ENCODE measurements at regions of chr7 and their contacts with region 1.

Region 1: GRCh38 chr7:23410446-23411183 is 59.7 kb downstream of the IGF2BP3 start:
- DNase-seq: no peak
- ATAC-seq: peak; percentile 93
- H3K4me3 Mint-ChIP-seq: peak overlapping the region; percentile 2
- H3K27ac Mint-ChIP-seq: peak overlapping the region; percentile 79
- H3K4me1 Mint-ChIP-seq: peaks cover 28% of the 10 kb centered on the region
- H3K27me3 Mint-ChIP-seq: no peaks in the 10 kb centered on the region
- CTCF ChIP-seq: no peak

Region 2: GRCh38 chr7:23287612-23288011 is 123.0 kb before region 1 on chr7:
- CTCF ChIA-PET with region 1: no interaction called
- POLR2A ChIA-PET with region 1: interaction called, 10 read pairs
- intact Hi-C with region 1: no loop called
- DNase-seq: no peak
- ATAC-seq: no peak
- H3K4me3 Mint-ChIP-seq: no peak overlapping the region
- H3K27ac Mint-ChIP-seq: no peak overlapping the region
- H3K4me1 Mint-ChIP-seq: no peaks in the 10 kb centered on the region
- H3K27me3 Mint-ChIP-seq: no peaks in the 10 kb centered on the region
- CTCF ChIP-seq: no peak

Region 3: DNA sequence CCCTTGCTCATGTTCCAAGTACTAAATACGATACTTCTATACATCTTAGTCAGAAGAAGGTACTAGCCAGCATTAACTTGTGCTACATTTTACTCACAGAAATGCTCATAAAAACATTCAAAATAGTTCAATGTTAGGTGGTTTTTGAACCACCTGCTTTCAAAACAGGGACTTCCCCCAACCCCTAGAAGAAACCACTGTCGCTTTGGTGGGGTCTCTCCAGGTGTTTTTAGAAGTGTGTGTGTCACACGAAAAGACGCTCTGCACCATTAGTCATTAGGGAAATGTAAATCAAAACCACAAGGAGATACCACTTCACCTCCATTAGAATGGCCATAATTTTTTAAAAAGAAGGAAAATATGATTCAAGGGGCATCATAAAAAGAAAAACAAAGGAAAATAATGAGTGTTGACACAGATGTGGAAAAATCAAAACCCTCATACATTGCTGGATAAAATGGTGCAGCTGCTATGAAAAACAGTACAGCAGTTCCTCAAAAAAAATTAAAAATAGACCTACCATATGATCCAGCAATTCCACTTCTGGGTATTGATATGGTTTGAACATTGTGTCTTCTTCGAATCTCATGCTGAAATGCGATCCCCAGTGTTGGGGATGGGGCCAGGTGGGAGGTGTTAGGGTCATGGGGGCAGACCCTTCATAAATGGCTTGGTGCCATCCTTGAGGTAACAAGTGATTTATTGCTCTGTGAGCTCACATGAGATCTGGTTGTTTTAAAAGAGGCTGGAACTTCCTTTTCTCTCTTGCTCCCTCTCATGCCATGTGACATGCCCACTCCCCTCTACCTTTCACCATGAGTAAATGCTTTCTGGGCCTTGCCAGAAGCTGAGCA is 37.2 kb before region 1 on chr7:
- CTCF ChIA-PET with region 1: no interaction called
- POLR2A ChIA-PET with region 1: interaction called, 6 read pairs
- intact Hi-C with region 1: loop called (anchors 1 kb)
- DNase-seq: peak; percentile 28
- ATAC-seq: peak; percentile 69
- H3K4me3 Mint-ChIP-seq: peak overlapping the region; percentile 68
- H3K27ac Mint-ChIP-seq: peak overlapping the region; percentile 94
- H3K4me1 Mint-ChIP-seq: peaks cover 70% of the 10 kb centered on the region
- H3K27me3 Mint-ChIP-seq: no peaks in the 10 kb centered on the region
- CTCF ChIP-seq: no peak

Region 4: DNA sequence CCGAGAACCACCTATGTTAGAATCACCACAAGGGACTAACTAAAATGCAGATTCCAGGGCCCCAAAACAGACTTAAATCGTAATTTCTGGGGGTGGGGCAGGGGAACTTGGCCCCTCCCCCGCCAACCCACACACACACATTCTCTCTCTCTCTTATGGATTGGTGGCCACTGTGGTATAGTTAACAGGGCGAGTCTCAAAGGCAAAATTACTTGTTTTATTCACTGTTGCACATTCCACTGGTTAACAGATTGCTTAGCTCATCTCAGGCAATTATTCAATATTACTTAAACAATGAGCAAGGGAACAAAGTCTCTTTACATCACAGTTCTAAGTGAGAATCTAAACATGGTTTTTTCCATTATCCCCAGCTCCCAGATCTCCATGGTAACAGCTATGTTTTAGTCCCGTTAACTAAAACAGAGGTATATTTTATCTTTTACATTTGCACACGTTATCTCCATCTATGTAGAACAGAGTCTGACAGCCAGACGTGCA is 21.1 kb after region 1 on chr7:
- CTCF ChIA-PET with region 1: interaction called, 9 read pairs
- POLR2A ChIA-PET with region 1: no interaction called
- intact Hi-C with region 1: loop called (anchors 2 kb)
- DNase-seq: no peak
- ATAC-seq: no peak
- H3K4me3 Mint-ChIP-seq: no peak overlapping the region
- H3K27ac Mint-ChIP-seq: no peak overlapping the region
- H3K4me1 Mint-ChIP-seq: no peaks in the 10 kb centered on the region
- H3K27me3 Mint-ChIP-seq: peaks cover 5% of the 10 kb centered on the region
- CTCF ChIP-seq: no peak